Cardiac septum (tissue), 1 donor: ENCODE measurements at regions of chr17 and their contacts with region 1.

Region 1: DNA sequence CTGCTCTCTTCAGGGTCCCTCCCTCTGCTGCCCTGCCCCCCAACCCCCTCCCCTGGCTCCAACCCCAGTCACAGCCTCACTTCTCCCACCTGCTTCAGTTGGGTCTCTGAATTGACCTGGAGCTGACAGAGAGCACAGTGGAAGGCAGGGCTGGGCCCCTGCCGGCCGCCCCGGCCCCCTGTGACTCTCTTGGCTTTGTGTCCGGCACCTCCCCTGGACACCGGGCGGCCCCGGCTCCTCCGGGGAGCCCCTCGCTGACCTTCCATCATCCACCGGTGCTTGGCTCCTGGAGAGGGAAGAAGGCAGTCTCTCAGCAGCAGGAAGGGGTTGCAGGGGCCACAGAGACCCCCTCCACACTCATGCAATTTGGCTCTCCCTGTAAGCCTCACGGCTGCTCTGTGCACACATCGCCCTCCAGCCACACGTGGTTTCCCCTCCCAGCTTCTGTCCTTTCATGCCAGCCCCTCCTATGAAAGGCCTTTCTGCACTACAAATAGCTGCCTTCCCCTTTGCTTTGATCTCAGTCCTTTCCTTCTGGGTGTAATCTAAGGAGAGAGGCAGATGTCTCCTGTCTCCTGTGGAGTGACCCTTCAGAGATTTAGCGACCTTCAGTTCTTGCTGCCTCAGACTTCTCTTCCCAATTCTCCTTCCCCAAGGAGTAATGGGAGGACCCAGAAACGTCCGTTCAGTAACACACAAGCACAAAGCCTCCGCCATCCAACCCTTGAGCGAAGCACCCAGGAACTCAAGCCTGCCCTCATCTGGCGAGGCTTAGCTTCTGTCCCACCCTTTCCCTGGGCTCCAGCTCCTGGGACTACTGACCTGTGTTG is 8.3 kb downstream of the NKIRAS2 start:
- DNase-seq: no peak

Region 2: GRCh38 chr17:42056635-42057034 is 28.5 kb after region 1 on chr17:
- intact Hi-C with region 1: no loop called
- DNase-seq: no peak

Region 3: GRCh38 chr17:42067351-42068091 is 39.3 kb after region 1 on chr17:
- intact Hi-C with region 1: loop called (anchors 5 kb)
- DNase-seq: peak; percentile 81

Region 4: DNA sequence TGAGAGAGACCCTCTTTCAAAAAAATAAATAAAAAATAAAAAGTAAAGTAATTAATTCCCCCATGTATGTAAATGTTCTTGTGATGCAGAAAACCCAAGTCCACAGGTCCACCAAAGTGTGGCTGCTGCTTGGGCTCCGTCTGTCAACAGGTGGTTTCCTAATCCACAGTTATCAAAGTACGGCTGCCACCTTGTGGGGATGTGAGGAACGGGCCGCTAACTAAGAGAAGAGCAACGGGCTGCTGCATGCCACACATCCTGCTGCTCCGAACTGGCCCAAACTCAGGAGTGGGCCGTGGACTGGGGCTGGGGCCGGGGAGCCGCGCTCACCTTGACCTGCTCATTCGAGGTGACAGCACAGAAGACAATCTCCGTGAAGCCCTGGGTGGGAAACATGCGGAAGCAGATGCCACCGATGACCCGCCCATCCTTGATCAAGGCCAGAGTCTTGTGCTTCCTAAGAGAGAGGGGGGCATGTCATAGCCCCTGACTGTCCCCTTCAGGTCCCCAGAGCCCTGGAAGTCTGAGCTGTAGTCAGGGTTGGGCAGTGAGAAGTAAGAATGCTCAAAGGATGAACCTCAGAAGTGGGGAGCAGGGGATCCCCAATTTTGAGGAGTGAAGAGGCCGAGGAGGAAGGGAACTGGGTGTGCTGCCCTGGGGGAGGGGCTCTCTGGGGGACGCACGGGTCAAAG is 88.7 kb after region 1 on chr17:
- intact Hi-C with region 1: loop called (anchors 1 kb)
- DNase-seq: peak; percentile 87